ENCODE measurements at regions of chr2 and their contacts with region 1.

Region 1: DNA sequence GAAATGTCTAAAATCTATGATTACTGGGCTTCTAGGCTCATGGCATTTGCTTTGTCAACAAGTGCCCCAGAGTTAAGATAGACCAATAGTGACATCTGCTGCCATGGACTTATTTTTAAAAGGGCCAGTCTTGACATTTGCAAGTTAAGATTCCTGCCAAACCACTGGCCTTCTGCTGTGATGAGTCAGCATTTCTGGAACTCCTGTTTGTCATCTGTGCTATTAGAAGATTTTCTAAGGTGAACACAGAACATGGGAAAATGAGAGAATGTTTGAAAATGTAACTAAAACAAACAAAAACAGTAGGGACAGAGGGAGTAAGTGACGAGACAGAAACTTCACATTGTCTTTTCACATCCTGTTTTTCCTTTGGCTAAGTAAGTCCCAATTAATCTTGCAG is 93.7 kb upstream of the WDR75 start:
- DNase-seq: no peak
- H3K4me3 Mint-ChIP-seq: no peak overlapping the region
- H3K27ac Mint-ChIP-seq: no peak overlapping the region
- H3K4me1 Mint-ChIP-seq: peaks cover 12% of the 10 kb centered on the region
- H3K27me3 Mint-ChIP-seq: no peaks in the 10 kb centered on the region

Region 2: GRCh38 chr2:188524519-188525113 is 822.9 kb before region 1 on chr2:
- CTCF ChIA-PET with region 1: no interaction called
- POLR2A ChIA-PET with region 1: no interaction called
- intact Hi-C with region 1: loop called (anchors 10 kb)
- DNase-seq: peak; percentile 22
- H3K4me3 Mint-ChIP-seq: no peak overlapping the region
- H3K27ac Mint-ChIP-seq: no peak overlapping the region
- H3K4me1 Mint-ChIP-seq: no peaks in the 10 kb centered on the region
- H3K27me3 Mint-ChIP-seq: peaks cover 3% of the 10 kb centered on the region

Region 3: GRCh38 chr2:189096769-189097447 is 250.6 kb before region 1 on chr2:
- CTCF ChIA-PET with region 1: no interaction called
- POLR2A ChIA-PET with region 1: no interaction called
- intact Hi-C with region 1: loop called (anchors 1 kb)
- DNase-seq: no peak
- H3K4me3 Mint-ChIP-seq: no peak overlapping the region
- H3K27ac Mint-ChIP-seq: no peak overlapping the region
- H3K4me1 Mint-ChIP-seq: no peaks in the 10 kb centered on the region
- H3K27me3 Mint-ChIP-seq: no peaks in the 10 kb centered on the region

Region 4: DNA sequence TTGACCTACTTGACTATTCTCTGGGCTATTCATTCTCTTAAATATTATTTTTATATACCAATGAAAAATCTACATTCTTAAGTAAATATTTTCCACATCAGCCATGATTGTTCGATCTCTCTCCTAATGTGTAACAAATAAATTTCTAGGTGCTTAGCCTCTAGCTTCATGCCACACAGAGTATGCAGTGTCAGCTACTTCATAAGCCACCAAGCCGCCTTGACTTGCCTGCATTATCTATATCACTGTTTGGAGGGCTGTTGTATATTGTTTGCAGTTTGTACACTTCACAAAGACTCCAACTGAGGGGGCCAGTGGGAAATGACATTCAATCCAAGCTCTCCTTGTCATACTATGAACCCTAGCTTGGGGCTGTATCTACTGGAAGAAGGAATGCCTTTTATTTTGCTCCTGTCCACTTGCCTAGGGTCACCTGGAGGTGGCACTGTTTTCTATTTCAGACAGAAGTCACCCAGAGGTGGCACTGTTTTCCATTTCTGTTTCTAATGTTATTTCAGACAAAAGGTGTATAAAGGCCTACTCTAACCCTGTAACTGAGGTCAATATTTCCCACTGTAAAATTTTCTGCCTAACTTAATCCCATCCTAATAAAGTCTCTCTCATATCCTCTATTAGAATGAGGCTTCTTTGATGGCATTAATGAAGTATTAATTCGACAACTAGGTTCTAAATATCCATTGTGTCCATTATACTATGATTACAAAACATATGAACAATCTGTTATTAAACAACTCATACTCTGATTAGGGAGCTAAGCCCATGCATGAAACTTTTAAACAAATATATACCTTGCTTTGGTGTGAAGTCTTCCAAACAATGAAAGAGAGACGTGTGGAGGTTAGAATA is 204.4 kb before region 1 on chr2:
- CTCF ChIA-PET with region 1: interaction called, 7 read pairs
- POLR2A ChIA-PET with region 1: no interaction called
- intact Hi-C with region 1: loop called (anchors 1 kb)
- DNase-seq: peak; percentile 52
- H3K4me3 Mint-ChIP-seq: no peak overlapping the region
- H3K27ac Mint-ChIP-seq: no peak overlapping the region
- H3K4me1 Mint-ChIP-seq: no peaks in the 10 kb centered on the region
- H3K27me3 Mint-ChIP-seq: no peaks in the 10 kb centered on the region

Region 5: GRCh38 chr2:189302274-189302948 is 45.1 kb before region 1 on chr2:
- CTCF ChIA-PET with region 1: no interaction called
- POLR2A ChIA-PET with region 1: no interaction called
- intact Hi-C with region 1: loop called (anchors 5 kb)
- DNase-seq: no peak
- H3K4me3 Mint-ChIP-seq: peak overlapping the region; percentile 0
- H3K27ac Mint-ChIP-seq: peak overlapping the region; percentile 83
- H3K4me1 Mint-ChIP-seq: peaks cover 72% of the 10 kb centered on the region
- H3K27me3 Mint-ChIP-seq: no peaks in the 10 kb centered on the region

Measured in activated CD4-positive, alpha-beta memory T cell treated with anti-CD3 and anti-CD28 coated beads for 36 hours (primary cell).